ENCODE measurements at regions of chr20 and their contacts with region 1.

Region 1: DNA sequence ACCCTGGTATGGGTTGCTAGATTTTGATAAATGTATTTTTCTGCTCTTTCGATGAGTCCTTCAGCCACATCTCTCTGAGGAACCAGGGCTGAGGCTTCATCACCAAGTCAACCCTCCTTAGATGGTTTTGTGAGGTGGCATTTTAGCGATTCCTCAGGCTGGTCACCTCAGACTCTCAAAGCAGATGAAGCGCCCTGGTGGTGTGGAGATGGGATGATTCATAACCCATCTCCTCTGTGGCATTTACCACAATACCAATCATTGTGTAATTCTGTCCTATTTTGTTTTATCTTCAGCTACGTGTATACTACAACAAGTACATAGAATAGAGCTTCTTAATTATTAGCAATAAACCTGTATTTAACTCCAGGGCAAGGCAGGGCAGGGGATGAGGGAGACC is 57.7 kb upstream of the EDN3 start:
- DNase-seq: peak in 3 of 9 experiments; percentile 23 to 32 (median 23)
- ATAC-seq: peak; percentile 73
- H3K4me3 ChIP-seq: no peak overlapping the region
- H3K4me3 Mint-ChIP-seq: no peak overlapping the region
- H3K27ac ChIP-seq: no peak overlapping the region
- H3K27ac Mint-ChIP-seq: no peak overlapping the region
- H3K4me1 ChIP-seq: no peaks in the 10 kb centered on the region
- H3K4me1 Mint-ChIP-seq: peaks cover 13% of the 10 kb centered on the region
- H3K27me3 ChIP-seq: no peaks in the 10 kb centered on the region
- H3K27me3 Mint-ChIP-seq: no peaks in the 10 kb centered on the region
- CTCF ChIP-seq: no peak

Region 2: GRCh38 chr20:59013959-59014608 is 228.6 kb before region 1 on chr20:
- CTCF ChIA-PET with region 1: no interaction called
- POLR2A ChIA-PET with region 1: no interaction called
- intact Hi-C with region 1: no loop called
- DNase-seq: peak in 5 of 9 experiments; percentile 25 to 58 (median 43)
- ATAC-seq: peak; percentile 70
- H3K4me3 ChIP-seq: no peak overlapping the region
- H3K4me3 Mint-ChIP-seq: no peak overlapping the region
- H3K27ac ChIP-seq: no peak overlapping the region
- H3K27ac Mint-ChIP-seq: no peak overlapping the region
- H3K4me1 ChIP-seq: peaks cover 26% of the 10 kb centered on the region
- H3K4me1 Mint-ChIP-seq: peaks cover 48% of the 10 kb centered on the region
- H3K27me3 ChIP-seq: no peaks in the 10 kb centered on the region
- H3K27me3 Mint-ChIP-seq: no peaks in the 10 kb centered on the region
- CTCF ChIP-seq: no peak

Region 3: GRCh38 chr20:59253779-59254319 is 11.1 kb after region 1 on chr20:
- CTCF ChIA-PET with region 1: interaction called, 10 read pairs
- POLR2A ChIA-PET with region 1: interaction called, 7 read pairs
- intact Hi-C with region 1: no loop called
- DNase-seq: peak in 7 of 9 experiments; percentile 26 to 70 (median 40)
- ATAC-seq: peak; percentile 61
- H3K4me3 ChIP-seq: peak overlapping the region in 1 of 2 experiments; percentile 18
- H3K4me3 Mint-ChIP-seq: peak overlapping the region; percentile 75
- H3K27ac ChIP-seq: peak overlapping the region; percentile 57 to 59
- H3K27ac Mint-ChIP-seq: peak overlapping the region; percentile 98
- H3K4me1 ChIP-seq: peaks cover 53% of the 10 kb centered on the region
- H3K4me1 Mint-ChIP-seq: peaks cover 74% of the 10 kb centered on the region
- H3K27me3 ChIP-seq: no peaks in the 10 kb centered on the region
- H3K27me3 Mint-ChIP-seq: no peaks in the 10 kb centered on the region
- CTCF ChIP-seq: no peak

Region 4: DNA sequence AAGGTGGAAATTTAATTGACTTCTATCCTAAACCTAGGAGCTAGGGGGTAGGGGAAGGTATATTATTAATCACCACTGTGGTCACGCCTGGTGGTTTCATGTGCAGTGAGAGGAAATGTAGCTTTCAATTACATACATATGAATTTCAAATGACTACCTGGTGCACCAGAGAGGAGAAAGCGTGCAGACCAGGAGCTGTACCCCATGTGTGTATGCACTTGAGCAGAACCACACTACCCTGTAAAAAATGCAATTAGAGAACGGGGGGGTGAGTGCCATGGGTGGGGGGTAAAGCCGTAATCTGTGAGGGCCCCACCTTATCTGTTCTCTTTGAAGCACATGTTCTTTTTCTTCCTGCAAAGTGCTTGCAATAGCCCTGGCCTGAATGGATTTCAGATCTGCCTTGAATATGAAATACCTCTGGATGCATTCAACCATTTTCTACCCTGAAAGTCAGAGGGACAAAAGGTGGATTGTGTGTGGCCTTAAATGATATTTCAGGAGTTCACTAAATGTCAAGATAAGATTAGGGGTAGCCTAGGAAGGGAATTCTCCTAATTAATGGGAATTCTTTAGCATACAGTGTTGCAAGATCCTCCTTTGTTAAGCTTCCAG is 26.8 kb after region 1 on chr20:
- CTCF ChIA-PET with region 1: no interaction called
- POLR2A ChIA-PET with region 1: no interaction called
- intact Hi-C with region 1: loop called in 1 of 2 experiments (anchors 1 kb)
- DNase-seq: no peak
- ATAC-seq: peak; percentile 31
- H3K4me3 ChIP-seq: no peak overlapping the region
- H3K4me3 Mint-ChIP-seq: no peak overlapping the region
- H3K27ac ChIP-seq: no peak overlapping the region
- H3K27ac Mint-ChIP-seq: no peak overlapping the region
- H3K4me1 ChIP-seq: peaks cover 29% of the 10 kb centered on the region
- H3K4me1 Mint-ChIP-seq: peaks cover 34% of the 10 kb centered on the region
- H3K27me3 ChIP-seq: no peaks in the 10 kb centered on the region
- H3K27me3 Mint-ChIP-seq: no peaks in the 10 kb centered on the region
- CTCF ChIP-seq: no peak

Measured in CD8-positive, alpha-beta T cell (primary cell).